Endothelial cell of umbilical vein (primary cell): ENCODE measurements at regions of chr10 and their contacts with region 1.

Region 1: GRCh38 chr10:87675396-87676376 is 16.0 kb downstream of the PAPSS2 start:
- DNase-seq: peak; percentile 79
- H3K4me3 ChIP-seq: no peak overlapping the region
- H3K27ac ChIP-seq: peak overlapping the region; percentile 44
- H3K4me1 ChIP-seq: peaks cover 11% of the 10 kb centered on the region
- H3K27me3 ChIP-seq: no peaks in the 10 kb centered on the region
- CTCF ChIP-seq: no peak
- POLR2A ChIP-seq: no peak

Region 2: DNA sequence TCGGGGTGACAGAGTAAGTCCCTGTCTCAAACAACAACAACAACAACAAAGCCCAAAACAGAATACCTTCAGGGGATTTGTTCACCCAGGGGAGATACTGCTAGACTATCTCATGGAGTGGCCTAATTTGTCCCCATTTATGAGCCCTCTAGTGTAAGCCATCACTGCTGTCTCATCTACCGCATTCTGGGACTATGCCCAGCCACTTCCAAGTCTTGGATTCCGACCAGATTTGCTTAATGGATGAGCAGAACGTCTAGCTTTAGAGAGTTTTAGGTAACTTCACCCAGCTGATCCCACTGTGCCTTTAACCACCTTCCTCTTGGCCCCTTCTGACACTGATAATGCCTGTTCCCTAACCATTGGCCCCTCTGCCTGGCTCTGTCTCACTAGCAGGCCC is 31.0 kb after region 1 on chr10:
- CTCF ChIA-PET with region 1: no interaction called
- POLR2A ChIA-PET with region 1: no interaction called
- dilution Hi-C with region 1: no loop called
- intact Hi-C with region 1: no loop called
- DNase-seq: no peak
- H3K4me3 ChIP-seq: no peak overlapping the region
- H3K27ac ChIP-seq: no peak overlapping the region
- H3K4me1 ChIP-seq: peaks cover 8% of the 10 kb centered on the region
- H3K27me3 ChIP-seq: no peaks in the 10 kb centered on the region
- CTCF ChIP-seq: no peak
- POLR2A ChIP-seq: no peak

Region 3: GRCh38 chr10:87734987-87735827 is 59.5 kb after region 1 on chr10:
- CTCF ChIA-PET with region 1: interaction called, 10 read pairs
- POLR2A ChIA-PET with region 1: interaction called, 3 read pairs
- dilution Hi-C with region 1: no loop called
- intact Hi-C with region 1: no loop called
- DNase-seq: peak; percentile 70
- H3K4me3 ChIP-seq: no peak overlapping the region
- H3K27ac ChIP-seq: no peak overlapping the region
- H3K4me1 ChIP-seq: peaks cover 9% of the 10 kb centered on the region
- H3K27me3 ChIP-seq: no peaks in the 10 kb centered on the region
- CTCF ChIP-seq: peak; percentile 49 to 68
- POLR2A ChIP-seq: no peak

Region 4: GRCh38 chr10:87861953-87862678 is 186.4 kb after region 1 on chr10:
- CTCF ChIA-PET with region 1: no interaction called
- POLR2A ChIA-PET with region 1: no interaction called
- dilution Hi-C with region 1: no loop called
- intact Hi-C with region 1: no loop called
- DNase-seq: peak; percentile 93
- H3K4me3 ChIP-seq: peak overlapping the region; percentile 50 to 78 (median 65)
- H3K27ac ChIP-seq: peak overlapping the region; percentile 3
- H3K4me1 ChIP-seq: peaks cover 4% of the 10 kb centered on the region
- H3K27me3 ChIP-seq: no peaks in the 10 kb centered on the region
- CTCF ChIP-seq: no peak
- POLR2A ChIP-seq: peak; percentile 79